Gastrocnemius medialis (tissue), 4 donors: ENCODE measurements at regions of chr22 and their contacts with region 1.

Region 1: DNA sequence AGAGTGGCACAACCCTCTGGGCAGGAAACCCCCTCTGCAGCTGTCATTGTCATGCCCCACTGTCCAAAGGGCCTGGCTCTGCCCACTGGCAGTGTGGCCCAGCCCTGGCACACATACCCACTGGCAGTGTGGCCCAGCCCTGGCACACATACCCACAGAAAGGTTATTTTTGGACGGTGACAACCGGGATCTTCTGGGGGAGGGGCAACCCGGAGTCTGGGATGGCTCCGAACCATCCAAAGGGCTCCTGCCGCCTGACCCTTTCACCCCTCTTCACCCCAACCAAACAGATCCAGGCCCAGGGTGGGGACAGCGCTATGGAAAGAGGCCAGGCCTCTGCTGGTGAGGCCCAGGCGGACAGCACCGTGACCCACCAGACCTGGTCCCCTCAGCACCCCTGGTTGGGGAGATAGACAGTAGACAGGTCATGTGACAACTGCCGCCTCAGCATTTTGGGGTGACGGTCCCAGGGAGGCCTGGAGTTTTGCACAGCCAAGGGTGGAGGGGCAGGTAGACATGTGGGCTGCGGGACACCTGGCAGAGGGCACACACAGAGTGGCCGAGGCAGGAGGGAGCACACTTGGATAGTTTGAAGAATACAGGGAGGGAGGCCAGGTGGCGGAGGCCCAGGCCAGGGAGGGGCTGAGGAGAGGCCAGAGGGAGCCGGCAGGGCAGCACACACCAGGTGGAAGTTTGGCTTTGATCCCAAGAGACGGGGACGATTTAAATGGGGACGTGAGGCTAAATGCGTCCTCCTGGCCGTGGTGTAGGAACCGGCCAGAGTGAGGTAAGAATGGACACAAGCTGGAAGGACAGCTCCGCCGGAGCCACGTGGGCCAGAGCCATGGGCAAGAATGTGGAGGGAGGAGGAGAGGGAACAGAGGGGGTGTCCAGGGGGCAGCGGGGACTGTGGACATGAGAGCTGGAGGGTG is 2.9 kb downstream of the MAPK12 start:
- DNase-seq: peak; percentile 92 to 98
- ATAC-seq: peak; percentile 50 to 61
- H3K4me3 ChIP-seq: peak overlapping the region; percentile 34 to 77 (median 52)
- H3K27ac ChIP-seq: peak overlapping the region; percentile 93 to 99 (median 98)
- H3K4me1 ChIP-seq: peaks cover 40 to 63% of the 10 kb centered on the region in 2 donors
- H3K27me3 ChIP-seq: no peaks in the 10 kb centered on the region
- CTCF ChIP-seq: no peak
- POLR2A ChIP-seq: peak; percentile 40 to 73

Region 2: GRCh38 chr22:49960159-49961004 is 298.2 kb before region 1 on chr22 and contains the start of gene PIM3:
- in situ Hi-C with region 1: no loop called
- intact Hi-C with region 1: loop called (anchors 2 kb)
- DNase-seq: peak; percentile 93 to 97
- ATAC-seq: peak; percentile 56 to 64
- H3K4me3 ChIP-seq: peak within 1 kb of the TSS; percentile 83 to 98 (median 88)
- H3K27ac ChIP-seq: peak within 1 kb of the TSS; percentile 90 to 99 (median 97)
- H3K4me1 ChIP-seq: peaks cover 35 to 43% of the 10 kb centered on the region in 2 donors
- H3K27me3 ChIP-seq: no peaks in the 10 kb centered on the region
- CTCF ChIP-seq: peak in 1 of 5 experiments; percentile 14
- POLR2A ChIP-seq: peak; percentile 94 to 96
- total RNA-seq, gene PIM3: 165 to 327 (median 188) TPM

Region 3: DNA sequence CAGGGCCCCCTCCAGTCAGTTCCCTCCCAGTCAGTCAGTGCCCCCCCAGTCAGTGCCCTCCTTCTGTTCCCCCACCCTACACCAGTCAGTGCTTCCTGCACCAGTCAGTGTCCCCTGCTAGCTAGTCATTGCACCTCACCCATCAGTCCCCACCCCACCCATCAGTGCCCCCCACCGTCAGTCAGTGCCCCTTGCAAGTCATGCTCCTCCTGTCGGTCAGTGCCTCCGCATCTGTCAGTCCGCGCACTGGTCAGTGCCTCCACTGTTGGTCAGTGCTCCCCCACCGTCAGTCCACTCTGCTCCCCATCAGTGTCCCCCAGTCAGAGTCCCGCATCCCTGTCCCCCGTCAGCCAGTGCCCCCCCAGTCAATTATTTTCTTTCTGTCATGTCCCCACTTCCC is 87.8 kb after region 1 on chr22:
- in situ Hi-C with region 1: no loop called
- intact Hi-C with region 1: no loop called
- DNase-seq: no peak
- ATAC-seq: no peak
- H3K4me3 ChIP-seq: no peak overlapping the region
- H3K27ac ChIP-seq: no peak overlapping the region
- H3K4me1 ChIP-seq: peaks cover 15 to 24% of the 10 kb centered on the region in 2 donors
- H3K27me3 ChIP-seq: no peaks in the 10 kb centered on the region
- CTCF ChIP-seq: no peak
- POLR2A ChIP-seq: no peak